ENCODE measurements at regions of chr13 and their contacts with region 1.

Region 1: DNA sequence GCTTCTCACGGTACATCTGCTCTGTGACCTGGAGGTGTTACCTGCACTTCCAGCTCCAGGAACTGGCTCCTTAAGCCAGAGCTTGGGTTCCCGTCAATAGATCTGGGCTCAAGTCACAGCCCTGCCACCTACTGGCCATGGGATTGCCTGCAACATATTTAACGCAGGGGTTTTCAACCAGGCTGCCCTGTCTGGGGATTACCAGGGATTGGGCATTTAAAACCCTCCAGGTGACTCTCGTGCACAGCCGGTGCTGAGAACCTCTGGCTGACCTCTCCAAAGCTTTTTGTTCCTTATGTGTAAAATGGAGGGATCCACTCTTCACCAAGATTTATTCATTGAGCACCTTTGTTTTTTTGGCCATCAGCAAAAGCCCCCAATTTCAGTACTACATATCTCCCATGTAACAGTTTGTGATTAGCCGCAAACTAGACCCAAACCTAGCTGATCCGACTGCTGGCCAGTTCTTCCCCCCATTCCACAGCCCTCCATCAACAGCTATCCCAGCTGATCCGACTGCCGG is 76.6 kb upstream of the STK24 start:
- DNase-seq: peak; percentile 37 to 67 (median 63)
- ATAC-seq: peak; percentile 96
- H3K4me3 ChIP-seq: no peak overlapping the region
- H3K4me3 Mint-ChIP-seq: peak overlapping the region in 7 of 10 donors; percentile 51 to 84 (median 62)
- H3K27ac ChIP-seq: no peak overlapping the region
- H3K27ac Mint-ChIP-seq: peak overlapping the region in 5 of 9 donors; percentile 16 to 88 (median 58)
- H3K4me1 ChIP-seq: no peaks in the 10 kb centered on the region
- H3K4me1 Mint-ChIP-seq: peaks cover 4 to 9% (median 5%) of the 10 kb centered on the region in 7 donors
- H3K27me3 ChIP-seq: no peaks in the 10 kb centered on the region
- H3K27me3 Mint-ChIP-seq: peaks cover 0 to 6% (median 0%) of the 10 kb centered on the region in 5 donors

Region 2: GRCh38 chr13:98349731-98350305 is 303.7 kb before region 1 on chr13:
- CTCF ChIA-PET with region 1: no interaction called
- POLR2A ChIA-PET with region 1: no interaction called
- intact Hi-C with region 1: loop called in 1 of 2 experiments (anchors 5 kb)
- DNase-seq: no peak
- ATAC-seq: no peak
- H3K4me3 ChIP-seq: no peak overlapping the region
- H3K4me3 Mint-ChIP-seq: no peak overlapping the region
- H3K27ac ChIP-seq: no peak overlapping the region
- H3K27ac Mint-ChIP-seq: no peak overlapping the region
- H3K4me1 ChIP-seq: no peaks in the 10 kb centered on the region
- H3K4me1 Mint-ChIP-seq: peaks cover 0 to 2% (median 0%) of the 10 kb centered on the region in 7 donors
- H3K27me3 ChIP-seq: no peaks in the 10 kb centered on the region
- H3K27me3 Mint-ChIP-seq: peaks cover 0 to 4% (median 0%) of the 10 kb centered on the region in 5 donors

Region 3: DNA sequence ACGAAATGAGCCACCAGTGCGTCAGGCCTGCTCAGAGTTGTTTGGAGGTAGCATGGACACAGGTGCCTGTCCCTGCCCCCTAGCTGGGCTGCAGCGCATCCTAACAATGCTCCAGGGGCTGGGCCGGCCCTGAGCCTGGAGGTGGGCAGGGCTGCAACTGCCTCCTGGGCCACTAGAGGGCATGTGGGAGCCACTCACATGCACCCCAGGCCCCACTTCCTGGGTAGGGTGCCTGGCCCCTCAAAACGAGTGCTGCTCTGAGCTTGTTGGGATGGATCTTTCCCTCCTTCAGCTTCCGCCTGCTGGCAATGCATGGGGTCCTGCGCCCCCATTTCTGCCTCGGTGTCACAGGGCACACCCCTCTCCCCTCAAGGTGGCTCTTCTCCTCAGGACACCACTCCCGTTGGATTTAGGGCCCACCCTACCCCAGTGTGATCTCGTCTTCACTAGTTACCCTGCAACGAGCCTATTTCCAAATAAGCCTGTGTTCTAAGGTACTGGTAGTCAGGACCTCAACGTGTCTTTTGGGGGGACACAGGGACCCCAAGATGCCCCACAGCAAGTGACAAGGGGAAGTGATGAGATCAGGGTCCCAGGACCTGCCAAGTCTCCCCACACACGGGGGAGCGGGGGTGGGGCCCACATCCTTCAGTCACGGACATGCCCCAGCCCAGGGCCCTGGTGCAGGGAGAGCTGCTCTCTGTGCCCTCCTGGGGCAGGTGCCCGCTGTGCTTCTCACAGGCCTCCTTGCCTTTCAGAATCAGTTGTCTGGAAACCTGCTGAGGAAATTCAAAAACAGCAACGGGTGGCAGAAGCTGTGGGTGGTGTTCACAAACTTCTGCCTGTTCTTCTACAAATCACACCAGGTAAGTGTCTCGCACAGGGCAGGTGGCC is 207.9 kb before region 1 on chr13:
- CTCF ChIA-PET with region 1: interaction called, 121 read pairs
- POLR2A ChIA-PET with region 1: no interaction called
- intact Hi-C with region 1: loop called (anchors 1 kb)
- DNase-seq: peak; percentile 59 to 82 (median 73)
- ATAC-seq: peak; percentile 95
- H3K4me3 ChIP-seq: no peak overlapping the region
- H3K4me3 Mint-ChIP-seq: peak overlapping the region in 9 of 10 donors; percentile 8 to 76 (median 68)
- H3K27ac ChIP-seq: peak overlapping the region; percentile 58
- H3K27ac Mint-ChIP-seq: peak overlapping the region; percentile 46 to 92 (median 88)
- H3K4me1 ChIP-seq: peaks cover 10 to 15% of the 10 kb centered on the region in 2 donors
- H3K4me1 Mint-ChIP-seq: peaks cover 0 to 23% (median 14%) of the 10 kb centered on the region in 7 donors
- H3K27me3 ChIP-seq: no peaks in the 10 kb centered on the region
- H3K27me3 Mint-ChIP-seq: no peaks in the 10 kb centered on the region

Region 4: GRCh38 chr13:98451676-98452470 is 201.7 kb before region 1 on chr13:
- CTCF ChIA-PET with region 1: interaction called, 121 read pairs
- POLR2A ChIA-PET with region 1: interaction called, 3 read pairs
- intact Hi-C with region 1: no loop called
- DNase-seq: no peak
- ATAC-seq: no peak
- H3K4me3 ChIP-seq: no peak overlapping the region
- H3K4me3 Mint-ChIP-seq: peak overlapping the region in 1 of 10 donors; percentile 40
- H3K27ac ChIP-seq: no peak overlapping the region
- H3K27ac Mint-ChIP-seq: peak overlapping the region; percentile 2 to 92 (median 71)
- H3K4me1 ChIP-seq: peaks cover 0 to 12% of the 10 kb centered on the region in 2 donors
- H3K4me1 Mint-ChIP-seq: peaks cover 9 to 30% (median 21%) of the 10 kb centered on the region in 7 donors
- H3K27me3 ChIP-seq: no peaks in the 10 kb centered on the region
- H3K27me3 Mint-ChIP-seq: no peaks in the 10 kb centered on the region

Region 5: DNA sequence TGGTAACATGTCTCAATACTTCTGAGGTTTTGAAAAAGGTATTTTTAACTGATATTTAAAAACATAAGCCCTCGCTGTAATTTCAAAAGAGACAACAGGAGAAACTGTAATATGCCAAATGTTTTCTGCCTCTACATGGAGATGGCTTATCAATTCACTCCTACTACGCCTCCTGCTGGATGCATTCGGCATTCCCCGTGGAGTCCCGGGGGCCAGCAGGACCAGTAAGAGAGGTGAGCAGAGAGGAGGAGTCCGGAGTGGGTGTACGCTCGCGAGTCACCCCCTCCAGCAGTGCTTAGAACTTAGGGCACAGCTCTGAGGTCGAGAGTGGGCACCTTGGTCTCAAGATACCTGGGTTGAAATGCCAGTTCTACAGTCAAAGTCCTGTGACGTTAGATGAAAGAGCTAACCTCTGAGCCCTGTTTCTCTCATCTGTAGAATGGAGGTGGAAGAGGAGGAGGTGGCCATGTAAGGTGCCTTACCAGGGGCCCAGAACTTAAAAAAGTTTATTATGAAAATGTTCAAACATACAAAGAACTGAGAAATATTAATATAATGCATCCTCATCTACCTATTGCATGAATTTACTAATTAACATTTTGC is 186.8 kb before region 1 on chr13:
- CTCF ChIA-PET with region 1: interaction called, 15 read pairs
- POLR2A ChIA-PET with region 1: no interaction called
- intact Hi-C with region 1: loop called in 1 of 2 experiments (anchors 1 kb)
- DNase-seq: peak in 1 of 9 donors; percentile 43
- ATAC-seq: peak; percentile 56
- H3K4me3 ChIP-seq: no peak overlapping the region
- H3K4me3 Mint-ChIP-seq: no peak overlapping the region
- H3K27ac ChIP-seq: no peak overlapping the region
- H3K27ac Mint-ChIP-seq: peak overlapping the region in 7 of 9 donors; percentile 6 to 48 (median 28)
- H3K4me1 ChIP-seq: no peaks in the 10 kb centered on the region
- H3K4me1 Mint-ChIP-seq: peaks cover 10 to 33% (median 22%) of the 10 kb centered on the region in 7 donors
- H3K27me3 ChIP-seq: no peaks in the 10 kb centered on the region
- H3K27me3 Mint-ChIP-seq: no peaks in the 10 kb centered on the region

Region 6: DNA sequence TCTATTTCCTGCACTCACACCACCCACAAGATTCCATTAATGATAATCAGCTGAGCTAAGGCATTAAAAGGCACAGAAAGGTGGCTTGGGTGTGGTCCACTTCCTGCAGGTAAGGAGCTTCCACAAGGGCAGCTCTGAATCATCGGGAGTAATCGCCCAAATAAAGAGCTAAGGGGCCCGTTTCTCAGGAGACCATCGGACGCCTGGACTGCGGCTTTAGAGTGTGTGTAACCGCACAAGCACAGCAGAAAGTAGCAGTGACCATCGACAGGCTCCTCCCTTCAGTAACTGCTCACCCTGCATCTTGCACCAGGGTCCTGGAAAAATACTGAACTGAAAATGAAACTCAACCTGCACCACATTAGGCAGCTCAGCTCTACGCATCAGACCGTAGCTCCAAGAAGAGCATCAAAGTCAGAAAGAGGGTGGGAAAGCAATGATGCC is 82.6 kb before region 1 on chr13:
- CTCF ChIA-PET with region 1: interaction called, 4 read pairs
- POLR2A ChIA-PET with region 1: no interaction called
- intact Hi-C with region 1: loop called in 1 of 2 experiments (anchors 2 kb)
- DNase-seq: peak in 6 of 9 donors; percentile 51 to 72 (median 60)
- ATAC-seq: peak; percentile 70
- H3K4me3 ChIP-seq: peak overlapping the region; percentile 63
- H3K4me3 Mint-ChIP-seq: peak overlapping the region; percentile 84 to 99 (median 90)
- H3K27ac ChIP-seq: peak overlapping the region; percentile 85
- H3K27ac Mint-ChIP-seq: peak overlapping the region; percentile 84 to 98 (median 96)
- H3K4me1 ChIP-seq: peaks cover 76 to 83% of the 10 kb centered on the region in 2 donors
- H3K4me1 Mint-ChIP-seq: peaks cover 82 to 97% (median 96%) of the 10 kb centered on the region in 7 donors
- H3K27me3 ChIP-seq: no peaks in the 10 kb centered on the region
- H3K27me3 Mint-ChIP-seq: no peaks in the 10 kb centered on the region

Region 7: GRCh38 chr13:98672944-98673545 is 19.5 kb after region 1 on chr13:
- CTCF ChIA-PET with region 1: interaction called, 4 read pairs
- POLR2A ChIA-PET with region 1: no interaction called
- intact Hi-C with region 1: loop called in 1 of 2 experiments (anchors 1 kb)
- DNase-seq: peak in 8 of 9 donors; percentile 16 to 57 (median 40)
- ATAC-seq: peak; percentile 79
- H3K4me3 ChIP-seq: no peak overlapping the region
- H3K4me3 Mint-ChIP-seq: no peak overlapping the region
- H3K27ac ChIP-seq: no peak overlapping the region
- H3K27ac Mint-ChIP-seq: no peak overlapping the region
- H3K4me1 ChIP-seq: no peaks in the 10 kb centered on the region
- H3K4me1 Mint-ChIP-seq: peaks cover 0 to 8% (median 0%) of the 10 kb centered on the region in 7 donors
- H3K27me3 ChIP-seq: no peaks in the 10 kb centered on the region
- H3K27me3 Mint-ChIP-seq: peaks cover 0 to 11% (median 0%) of the 10 kb centered on the region in 5 donors

Region 8: GRCh38 chr13:98910501-98910951 is 257.0 kb after region 1 on chr13:
- CTCF ChIA-PET with region 1: no interaction called
- POLR2A ChIA-PET with region 1: no interaction called
- intact Hi-C with region 1: no loop called
- DNase-seq: peak in 8 of 9 donors; percentile 13 to 59 (median 50)
- ATAC-seq: peak; percentile 71
- H3K4me3 ChIP-seq: no peak overlapping the region
- H3K4me3 Mint-ChIP-seq: peak overlapping the region in 9 of 10 donors; percentile 5 to 82 (median 69)
- H3K27ac ChIP-seq: no peak overlapping the region
- H3K27ac Mint-ChIP-seq: peak overlapping the region; percentile 75 to 96 (median 90)
- H3K4me1 ChIP-seq: peaks cover 9 to 10% of the 10 kb centered on the region in 2 donors
- H3K4me1 Mint-ChIP-seq: peaks cover 12 to 53% (median 47%) of the 10 kb centered on the region in 7 donors
- H3K27me3 ChIP-seq: no peaks in the 10 kb centered on the region
- H3K27me3 Mint-ChIP-seq: no peaks in the 10 kb centered on the region

Measured in naive thymus-derived CD4-positive, alpha-beta T cell (primary cell).